Transverse colon (tissue), 4 donors: ENCODE measurements at regions of chr11 and their contacts with region 1.

Region 1: DNA sequence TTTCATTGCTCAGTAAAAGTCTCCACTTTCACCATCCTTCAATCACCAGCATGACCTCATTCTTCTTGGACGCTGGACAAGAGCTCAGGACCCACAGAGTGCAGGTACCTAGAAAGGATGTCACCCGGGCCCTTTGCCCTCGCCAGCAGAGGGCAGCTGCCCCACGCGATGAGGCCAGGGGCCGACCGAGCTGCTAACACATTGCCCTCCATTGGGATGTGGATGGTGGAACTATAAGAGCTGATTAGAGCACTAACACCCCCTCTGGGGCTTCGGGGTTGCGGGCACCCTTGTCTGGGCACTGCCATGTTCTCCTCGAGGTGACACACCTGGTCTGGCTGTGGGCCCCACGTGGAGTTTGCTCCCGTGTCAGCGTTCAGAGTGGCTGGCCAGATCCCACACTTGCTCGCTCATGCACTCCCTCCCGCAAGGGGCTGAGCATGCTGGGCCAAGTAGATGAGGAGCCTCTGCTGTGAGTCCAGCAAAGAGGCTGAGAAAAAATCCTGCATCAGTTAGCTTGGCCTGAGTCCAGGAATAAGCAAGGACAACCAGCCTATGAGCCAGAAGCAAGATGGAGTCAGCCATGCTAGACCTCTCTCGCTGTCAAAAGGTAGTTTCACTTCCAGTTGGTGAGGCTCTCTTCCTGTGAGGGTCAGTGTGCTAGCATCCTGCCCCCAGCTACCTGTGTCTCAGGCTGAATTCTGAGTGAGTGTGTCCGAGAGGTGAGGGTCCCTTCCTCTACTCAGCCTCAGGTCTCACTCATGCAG is 9.8 kb downstream of the KRTAP5-6 start:
- DNase-seq: no peak
- H3K4me3 ChIP-seq: no peak overlapping the region
- H3K27ac ChIP-seq: no peak overlapping the region
- H3K4me1 ChIP-seq: no peaks in the 10 kb centered on the region
- H3K27me3 ChIP-seq: peaks cover 49% of the 10 kb centered on the region
- CTCF ChIP-seq: peak in 1 of 5 experiments; percentile 19
- EP300 ChIP-seq: no peak
- POLR2A ChIP-seq: no peak

Region 2: GRCh38 chr11:1572197-1573076 is 134.4 kb before region 1 on chr11 and contains the start of gene DUSP8:
- in situ Hi-C with region 1: no loop called
- intact Hi-C with region 1: no loop called
- DNase-seq: peak; percentile 95
- H3K4me3 ChIP-seq: peak within 1 kb of the TSS; percentile 58 to 81 (median 72)
- H3K27ac ChIP-seq: peak within 1 kb of the TSS; percentile 89 to 95 (median 92)
- H3K4me1 ChIP-seq: peaks cover 20 to 65% (median 54%) of the 10 kb centered on the region in 4 donors
- H3K27me3 ChIP-seq: peaks cover 2% of the 10 kb centered on the region
- CTCF ChIP-seq: no peak
- EP300 ChIP-seq: no peak
- POLR2A ChIP-seq: peak; percentile 46
- total RNA-seq, gene DUSP8: 13.3 to 31.8 (median 19.8) TPM

Region 3: DNA sequence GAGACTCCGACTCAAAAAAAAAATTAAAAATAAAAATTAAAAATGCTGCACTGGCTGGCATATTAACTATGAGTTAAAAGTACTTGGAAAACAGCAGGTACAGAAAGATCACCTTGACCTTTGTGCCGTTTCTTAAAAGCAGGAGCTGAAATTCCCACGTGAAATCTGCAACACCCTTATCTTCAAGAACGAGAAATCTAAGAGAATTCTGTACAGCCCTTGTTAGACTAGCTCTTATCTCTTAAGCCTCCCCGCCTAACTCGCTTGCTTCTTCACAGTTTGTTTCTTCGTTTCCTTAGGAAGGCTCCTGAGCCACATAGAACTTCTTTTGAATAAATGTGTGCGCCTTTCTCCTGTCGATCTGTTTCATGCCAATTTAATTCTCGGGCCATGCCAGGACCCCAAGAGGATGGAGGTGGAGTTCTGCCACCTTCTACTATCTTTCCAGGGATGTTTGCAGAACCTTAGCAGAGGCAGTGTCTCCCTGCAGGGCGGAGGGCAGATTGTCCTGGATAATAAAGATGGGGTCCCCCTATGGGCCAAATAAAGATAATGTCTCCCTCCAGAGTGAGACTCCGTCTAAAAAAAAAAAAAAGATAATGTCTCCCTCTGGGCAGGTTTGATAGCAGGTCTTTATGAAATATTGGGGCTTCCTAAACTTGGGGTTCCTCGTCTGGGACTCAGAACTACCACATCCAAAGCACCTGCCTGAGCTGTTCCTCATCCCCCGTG is 100.6 kb after region 1 on chr11:
- in situ Hi-C with region 1: loop called (anchors 10 to 25 kb)
- intact Hi-C with region 1: no loop called
- DNase-seq: no peak
- H3K4me3 ChIP-seq: no peak overlapping the region
- H3K27ac ChIP-seq: no peak overlapping the region
- H3K4me1 ChIP-seq: no peaks in the 10 kb centered on the region
- H3K27me3 ChIP-seq: peaks cover 45% of the 10 kb centered on the region
- CTCF ChIP-seq: no peak
- EP300 ChIP-seq: no peak
- POLR2A ChIP-seq: no peak

Region 4: GRCh38 chr11:1817511-1817910 is 110.7 kb after region 1 on chr11:
- in situ Hi-C with region 1: loop called (anchors 10 to 25 kb)
- intact Hi-C with region 1: loop called (anchors 5 kb)
- DNase-seq: no peak
- H3K4me3 ChIP-seq: no peak overlapping the region
- H3K27ac ChIP-seq: no peak overlapping the region
- H3K4me1 ChIP-seq: no peaks in the 10 kb centered on the region
- H3K27me3 ChIP-seq: peaks cover 10% of the 10 kb centered on the region
- CTCF ChIP-seq: no peak
- EP300 ChIP-seq: no peak
- POLR2A ChIP-seq: no peak